HAP-1 (cell line): ENCODE measurements at regions of chr16 and their contacts with region 1.

Region 1: DNA sequence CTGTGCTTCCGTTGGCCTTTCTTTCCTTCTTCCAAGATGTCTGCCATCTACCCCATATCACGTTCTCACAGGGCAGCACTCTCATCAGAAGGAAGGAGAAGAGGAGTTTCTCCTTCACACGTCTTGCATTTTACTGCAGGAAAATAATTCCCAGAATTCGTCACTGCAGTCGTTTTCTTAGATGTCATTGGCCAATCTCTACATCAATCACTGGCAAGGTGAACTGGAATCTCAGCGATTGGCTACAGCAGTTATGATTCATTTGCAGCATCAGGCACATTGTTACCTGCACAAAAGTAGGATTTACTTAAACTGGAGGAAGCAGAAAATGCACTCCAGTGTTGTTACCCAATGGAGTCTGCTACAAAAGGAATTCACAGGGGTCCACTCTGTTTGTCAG is 277.2 kb upstream of the RBFOX1 start:
- DNase-seq: no peak
- H3K4me3 ChIP-seq: no peak overlapping the region
- H3K4me1 ChIP-seq: no peaks in the 10 kb centered on the region
- H3K27me3 ChIP-seq: no peaks in the 10 kb centered on the region

Region 2: DNA sequence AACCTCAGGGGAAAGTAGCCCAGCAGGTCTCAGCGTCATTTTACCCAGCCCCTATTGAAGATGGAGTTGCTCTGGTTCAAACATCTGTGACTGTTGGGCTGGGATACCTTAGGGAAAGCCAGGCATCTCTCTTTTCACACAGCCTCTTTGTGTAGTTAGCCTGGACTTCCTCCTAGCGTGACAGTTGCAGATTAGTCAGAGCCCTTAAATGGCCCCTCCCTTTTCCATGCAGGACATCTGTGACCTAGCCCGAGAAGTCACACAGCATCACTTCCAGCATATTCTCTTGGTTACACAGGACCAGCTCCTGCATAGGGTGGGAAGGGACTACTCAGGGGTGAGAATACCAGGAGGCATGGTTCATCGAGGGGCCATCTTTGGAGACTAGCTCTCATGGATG is 97.8 kb before region 1 on chr16:
- in situ Hi-C with region 1: loop called (anchors 25 kb)
- DNase-seq: no peak
- H3K4me3 ChIP-seq: no peak overlapping the region
- H3K4me1 ChIP-seq: no peaks in the 10 kb centered on the region
- H3K27me3 ChIP-seq: no peaks in the 10 kb centered on the region